ENCODE measurements at regions of chr5 and their contacts with region 1.

Region 1: DNA sequence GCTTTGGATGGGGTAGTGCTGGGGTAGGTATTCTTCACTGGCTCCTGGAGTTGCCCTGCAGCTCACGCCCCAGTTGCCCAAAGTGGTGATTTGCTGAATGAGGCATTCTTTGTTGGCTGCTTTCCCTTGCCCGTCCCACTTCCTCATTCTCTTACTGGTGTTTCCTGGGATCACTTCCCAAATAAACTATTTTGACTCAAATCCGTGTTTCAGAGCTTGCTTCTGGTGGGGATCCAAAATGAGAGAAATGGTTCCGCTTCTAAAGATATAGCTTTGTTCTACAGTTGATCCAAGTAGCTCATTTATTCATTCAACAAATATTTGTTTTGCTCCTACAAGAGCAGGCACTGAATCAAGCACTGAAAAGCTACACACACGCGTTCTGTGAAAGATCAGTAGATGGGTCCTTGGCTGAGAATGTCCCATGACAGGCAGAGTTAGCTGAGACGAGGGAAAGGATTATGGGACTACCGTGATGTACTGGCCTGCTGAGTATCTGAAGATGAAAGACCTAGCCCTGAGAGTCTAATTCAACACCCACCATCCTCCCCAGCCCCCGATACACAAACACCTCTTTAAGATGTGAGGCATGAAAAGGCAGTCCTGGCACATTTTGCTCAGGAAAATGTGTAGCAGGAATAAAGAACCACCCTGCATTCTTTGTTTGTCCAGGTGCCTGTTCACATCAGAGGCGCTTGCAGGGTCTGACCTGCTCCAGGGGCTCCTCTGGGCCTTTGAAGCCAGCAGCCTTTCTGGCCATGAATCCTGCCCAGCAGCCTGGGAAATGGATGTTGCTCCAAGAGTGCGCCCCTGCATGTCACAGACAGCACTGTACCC is 143.1 kb upstream of the RANBP3L start:
- DNase-seq: peak in 3 of 10 donors; percentile 38 to 60 (median 54)
- H3K4me3 ChIP-seq: no peak overlapping the region
- H3K27ac ChIP-seq: peak overlapping the region in 42 of 59 donors; percentile 9 to 83 (median 46)
- H3K27me3 ChIP-seq: no peaks in the 10 kb centered on the region
- CTCF ChIP-seq: no peak

Region 2: DNA sequence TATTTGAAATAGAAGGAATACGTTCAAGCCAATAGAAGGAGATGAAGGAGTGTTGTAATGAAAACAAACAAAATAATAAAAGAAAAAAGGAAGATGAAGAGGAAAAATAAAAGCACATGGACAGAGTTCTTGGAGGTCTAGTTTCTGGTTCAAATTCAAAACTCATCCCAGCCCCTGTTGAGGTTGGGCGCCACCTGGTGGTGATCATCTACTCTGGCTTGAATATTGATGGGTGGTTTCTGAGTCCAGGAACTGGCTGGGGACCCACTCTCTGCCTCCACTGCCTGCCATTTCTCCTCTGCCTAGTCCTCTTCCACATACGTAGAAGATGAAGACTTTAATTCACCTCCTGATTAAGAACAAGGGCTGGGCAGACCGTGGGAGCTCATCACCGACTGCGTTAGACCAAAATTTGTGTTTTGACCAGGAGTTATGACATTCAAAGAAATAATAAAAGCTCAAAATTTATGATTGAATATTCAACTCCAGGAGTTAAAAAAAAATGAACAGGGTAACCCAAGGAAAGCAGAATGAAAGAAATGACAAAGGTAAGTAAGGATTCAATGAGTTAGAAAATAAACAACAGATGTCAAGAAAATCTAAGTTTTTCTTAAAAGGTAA is 62.6 kb after region 1 on chr5:
- intact Hi-C with region 1: loop called in 1 of 2 experiments (anchors 10 kb)
- DNase-seq: peak; percentile 54 to 75 (median 64)
- H3K4me3 ChIP-seq: no peak overlapping the region
- H3K27ac ChIP-seq: no peak overlapping the region
- H3K27me3 ChIP-seq: no peaks in the 10 kb centered on the region
- CTCF ChIP-seq: peak; percentile 54 to 91 (median 79)

Measured in dorsolateral prefrontal cortex (tissue), 120 donors.